ENCODE measurements at regions of chrX and their contacts with region 1.

Region 1: DNA sequence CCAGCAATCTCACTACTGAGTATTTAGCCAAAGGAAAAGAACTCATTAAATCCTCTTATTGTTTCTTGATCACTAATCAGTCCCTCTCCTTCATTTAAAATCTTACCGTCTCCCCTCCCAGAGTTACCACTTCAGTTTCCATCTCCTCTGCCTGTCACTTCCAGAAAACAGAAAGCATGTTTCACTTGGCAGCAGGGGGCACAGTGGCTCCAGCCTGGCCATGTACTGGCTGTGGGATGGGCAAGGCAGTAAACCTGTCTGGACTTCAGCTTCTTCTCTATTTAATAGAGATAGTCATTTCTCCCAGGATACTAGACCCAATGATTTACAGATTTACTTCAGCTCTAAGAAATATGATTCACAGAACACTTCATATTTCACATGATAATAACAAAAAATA is 63.2 kb downstream of the CD40LG start:
- DNase-seq: peak; percentile 25 to 57 (median 47)
- ATAC-seq: peak; percentile 56 to 85 (median 82)
- H3K4me3 ChIP-seq: no peak overlapping the region
- H3K27ac ChIP-seq: peak overlapping the region in 1 of 12 donors; percentile 67
- H3K4me1 ChIP-seq: peaks cover 0 to 26% (median 0%) of the 10 kb centered on the region in 12 donors
- H3K27me3 ChIP-seq: peaks cover 0 to under 1% (median 0%) of the 10 kb centered on the region in 9 donors
- CTCF ChIP-seq: peak in 11 of 12 donors; percentile 21 to 56 (median 45)
- POLR2A ChIP-seq: no peak

Region 2: GRCh38 chrX:136866337-136867095 is 155.4 kb after region 1 on chrX:
- intact Hi-C with region 1: loop called in 1 of 10 experiments (anchors 5 kb)
- DNase-seq: no peak
- ATAC-seq: peak in 2 of 4 donors; percentile 40 to 41
- H3K4me3 ChIP-seq: no peak overlapping the region
- H3K27ac ChIP-seq: peak overlapping the region in 5 of 12 donors; percentile 14 to 46 (median 30)
- H3K4me1 ChIP-seq: peaks cover 0 to 40% (median 6%) of the 10 kb centered on the region in 12 donors
- H3K27me3 ChIP-seq: no peaks in the 10 kb centered on the region
- CTCF ChIP-seq: no peak
- POLR2A ChIP-seq: no peak

Region 3: GRCh38 chrX:136909706-136910564 is 198.8 kb after region 1 on chrX:
- intact Hi-C with region 1: loop called in 1 of 10 experiments (anchors 10 kb)
- DNase-seq: peak; percentile 54 to 83 (median 81)
- ATAC-seq: peak; percentile 80 to 89 (median 88)
- H3K4me3 ChIP-seq: peak overlapping the region; percentile 33 to 79 (median 64)
- H3K27ac ChIP-seq: peak overlapping the region; percentile 54 to 87 (median 81)
- H3K4me1 ChIP-seq: peaks cover 0 to 10% (median 0%) of the 10 kb centered on the region in 12 donors
- H3K27me3 ChIP-seq: no peaks in the 10 kb centered on the region
- CTCF ChIP-seq: peak in 1 of 12 donors; percentile 2
- POLR2A ChIP-seq: no peak

Region 4: GRCh38 chrX:136920001-136920400 is 208.9 kb after region 1 on chrX:
- intact Hi-C with region 1: loop called (anchors 2 to 10 kb)
- DNase-seq: no peak
- ATAC-seq: peak in 2 of 4 donors; percentile 48 to 49
- H3K4me3 ChIP-seq: no peak overlapping the region
- H3K27ac ChIP-seq: no peak overlapping the region
- H3K4me1 ChIP-seq: peaks cover 0 to 3% (median 0%) of the 10 kb centered on the region in 12 donors
- H3K27me3 ChIP-seq: no peaks in the 10 kb centered on the region
- CTCF ChIP-seq: no peak
- POLR2A ChIP-seq: no peak